Activated naive CD4-positive, alpha-beta T cell treated with anti-CD3 and anti-CD28 coated beads for 36 hours (primary cell): ENCODE measurements at regions of chr12 and their contacts with region 1.

Region 1: GRCh38 chr12:21677622-21678277 is 20.1 kb upstream of the LDHB start:
- DNase-seq: peak; percentile 28
- H3K4me3 Mint-ChIP-seq: peak overlapping the region; percentile 3
- H3K27ac Mint-ChIP-seq: peak overlapping the region; percentile 70
- H3K4me1 Mint-ChIP-seq: peaks cover 47% of the 10 kb centered on the region
- H3K27me3 Mint-ChIP-seq: no peaks in the 10 kb centered on the region

Region 2: GRCh38 chr12:21248679-21249078 is 429.1 kb before region 1 on chr12:
- CTCF ChIA-PET with region 1: interaction called, 4 read pairs
- intact Hi-C with region 1: loop called (anchors 1 kb)
- DNase-seq: no peak
- H3K4me3 Mint-ChIP-seq: no peak overlapping the region
- H3K27ac Mint-ChIP-seq: no peak overlapping the region
- H3K4me1 Mint-ChIP-seq: no peaks in the 10 kb centered on the region
- H3K27me3 Mint-ChIP-seq: no peaks in the 10 kb centered on the region

Region 3: DNA sequence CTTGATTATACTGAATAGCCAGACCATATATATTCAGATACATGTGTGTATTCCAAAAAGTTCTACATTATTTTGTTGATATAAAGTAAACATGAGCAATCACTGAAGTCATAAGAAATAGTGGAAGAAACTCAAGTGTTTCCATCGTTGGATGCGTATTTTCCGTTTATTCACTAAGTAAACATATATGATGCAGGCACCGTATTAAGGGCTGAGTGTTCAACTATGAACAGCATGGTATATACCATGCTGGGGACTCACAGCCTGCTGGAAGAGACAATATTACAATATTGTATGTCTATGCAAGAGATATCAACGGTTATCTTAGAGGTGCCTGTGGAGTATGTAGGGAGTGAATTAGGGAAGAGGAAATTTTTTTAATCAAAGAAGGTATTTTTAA is 239.1 kb before region 1 on chr12:
- CTCF ChIA-PET with region 1: interaction called, 5 read pairs
- intact Hi-C with region 1: loop called (anchors 1 kb)
- DNase-seq: no peak
- H3K4me3 Mint-ChIP-seq: peak overlapping the region; percentile 90
- H3K27ac Mint-ChIP-seq: peak overlapping the region; percentile 95
- H3K4me1 Mint-ChIP-seq: peaks cover 38% of the 10 kb centered on the region
- H3K27me3 Mint-ChIP-seq: no peaks in the 10 kb centered on the region

Region 4: DNA sequence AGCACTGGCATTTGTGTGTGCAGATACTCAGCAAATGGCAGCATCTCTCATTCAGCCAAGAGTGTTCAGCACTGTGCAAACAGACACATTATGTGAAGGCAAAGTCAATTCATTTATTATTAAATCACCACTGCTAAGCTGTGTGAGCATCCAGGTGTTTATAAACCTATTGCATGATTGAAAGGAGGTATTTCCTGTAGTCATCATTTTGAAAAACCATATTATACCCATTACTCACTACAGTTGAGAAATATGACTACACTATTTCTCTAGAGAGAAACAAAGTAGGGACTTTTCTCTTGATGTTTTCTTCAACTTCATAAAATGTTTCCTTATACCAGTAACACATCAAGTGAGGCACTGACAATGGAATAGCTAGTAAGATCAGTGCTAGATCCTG is 138.0 kb before region 1 on chr12:
- CTCF ChIA-PET with region 1: interaction called, 3 read pairs
- intact Hi-C with region 1: loop called (anchors 1 kb)
- DNase-seq: no peak
- H3K4me3 Mint-ChIP-seq: no peak overlapping the region
- H3K27ac Mint-ChIP-seq: no peak overlapping the region
- H3K4me1 Mint-ChIP-seq: peaks cover 12% of the 10 kb centered on the region
- H3K27me3 Mint-ChIP-seq: no peaks in the 10 kb centered on the region

Region 5: DNA sequence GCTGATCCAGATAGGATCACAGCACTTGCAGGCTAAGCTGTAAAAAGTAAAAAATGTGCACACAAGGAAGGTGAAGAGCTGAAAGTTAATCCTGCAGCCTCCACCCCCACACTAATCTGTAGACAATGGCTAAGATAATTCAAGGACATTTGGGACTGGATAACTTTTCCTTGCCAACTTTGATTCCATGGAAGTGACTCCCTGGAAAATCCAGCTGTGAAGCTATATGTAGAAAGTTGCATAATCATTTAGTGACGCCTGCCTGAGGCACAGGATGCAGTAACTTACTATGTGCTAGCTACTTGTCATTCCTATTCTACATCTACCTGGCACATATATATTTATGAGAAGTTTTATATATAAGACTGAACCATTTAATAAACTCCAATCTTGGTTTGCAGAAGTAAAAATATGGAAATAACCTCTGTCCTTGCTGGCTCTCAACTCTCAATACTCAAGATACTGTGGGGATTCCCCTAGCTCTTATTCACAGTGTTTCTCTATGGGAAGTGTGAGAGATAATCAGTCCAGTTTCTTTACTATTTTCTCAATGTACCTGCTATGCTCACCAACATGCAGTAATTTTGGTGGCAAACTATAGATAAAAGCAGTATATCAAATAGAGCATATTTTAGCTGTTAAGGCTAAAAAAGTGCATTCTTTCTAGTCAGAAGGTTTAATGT is 34.9 kb before region 1 on chr12:
- CTCF ChIA-PET with region 1: interaction called, 11 read pairs
- intact Hi-C with region 1: loop called (anchors 1 kb)
- DNase-seq: no peak
- H3K4me3 Mint-ChIP-seq: no peak overlapping the region
- H3K27ac Mint-ChIP-seq: peak overlapping the region; percentile 85
- H3K4me1 Mint-ChIP-seq: peaks cover 81% of the 10 kb centered on the region
- H3K27me3 Mint-ChIP-seq: no peaks in the 10 kb centered on the region

Region 6: GRCh38 chr12:21690704-21691368 is 13.1 kb after region 1 on chr12:
- CTCF ChIA-PET with region 1: interaction called, 12 read pairs
- intact Hi-C with region 1: no loop called
- DNase-seq: no peak
- H3K4me3 Mint-ChIP-seq: no peak overlapping the region
- H3K27ac Mint-ChIP-seq: no peak overlapping the region
- H3K4me1 Mint-ChIP-seq: peaks cover 26% of the 10 kb centered on the region
- H3K27me3 Mint-ChIP-seq: no peaks in the 10 kb centered on the region